ENCODE measurements at regions of chr21 and their contacts with region 1.

Region 1: GRCh38 chr21:17139720-17140119 is 373.1 kb upstream of the CXADR start:
- DNase-seq: no peak
- ATAC-seq: peak in 2 of 8 donors; percentile 24 to 35
- H3K4me3 ChIP-seq: peak overlapping the region in 9 of 10 donors; percentile 22 to 56 (median 44)
- H3K27ac ChIP-seq: peak overlapping the region in 4 of 10 donors; percentile 28 to 62 (median 36)
- H3K4me1 ChIP-seq: no peaks in the 10 kb centered on the region
- H3K27me3 ChIP-seq: no peaks in the 10 kb centered on the region
- CTCF ChIP-seq: no peak

Region 2: DNA sequence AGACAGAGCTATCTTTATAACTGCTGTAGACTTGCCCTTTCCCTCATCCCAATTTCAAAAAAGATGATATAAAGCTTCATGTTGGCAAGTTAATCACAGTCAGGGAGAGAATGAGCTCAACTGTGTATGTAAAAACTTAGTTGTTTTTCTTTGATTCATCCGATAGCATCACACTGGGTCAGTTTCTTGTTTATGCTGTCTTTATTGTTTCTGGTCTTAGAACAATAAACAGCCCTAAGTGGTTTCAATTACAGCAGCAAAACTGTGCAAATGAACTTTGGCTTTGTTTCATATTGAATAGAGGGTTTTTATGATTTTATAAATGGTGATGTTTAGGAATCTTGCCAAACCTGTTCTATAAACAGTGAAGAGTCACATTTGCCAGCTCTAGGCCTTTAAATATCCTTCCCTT is 50.6 kb before region 1 on chr21:
- intact Hi-C with region 1: loop called in 1 of 10 experiments (anchors 10 kb)
- DNase-seq: no peak
- ATAC-seq: no peak
- H3K4me3 ChIP-seq: no peak overlapping the region
- H3K27ac ChIP-seq: no peak overlapping the region
- H3K4me1 ChIP-seq: no peaks in the 10 kb centered on the region
- H3K27me3 ChIP-seq: no peaks in the 10 kb centered on the region
- CTCF ChIP-seq: no peak

Region 3: DNA sequence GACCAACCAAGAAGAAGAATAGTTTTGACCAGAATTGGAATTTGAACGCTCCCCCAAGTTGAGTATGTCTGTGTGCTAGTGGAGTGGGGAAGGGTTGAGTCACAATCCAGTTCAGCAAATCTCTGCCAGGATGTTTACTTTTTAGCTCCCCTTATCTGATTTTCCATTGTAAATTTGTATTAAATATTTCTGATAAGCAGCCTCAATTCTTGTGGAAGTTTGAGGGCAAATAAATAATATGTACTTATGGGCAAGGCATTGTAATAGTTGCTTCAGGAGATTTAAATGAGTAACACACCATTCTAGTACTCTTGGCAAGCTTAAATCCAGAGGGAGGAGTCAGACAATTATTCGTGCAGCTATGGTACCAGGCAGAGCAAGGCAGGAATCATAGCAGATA is 387.5 kb after region 1 on chr21:
- intact Hi-C with region 1: no loop called
- DNase-seq: no peak
- ATAC-seq: peak in 5 of 8 donors; percentile 33 to 75 (median 47)
- H3K4me3 ChIP-seq: no peak overlapping the region
- H3K27ac ChIP-seq: peak overlapping the region in 1 of 10 donors; percentile 10
- H3K4me1 ChIP-seq: peaks cover 0 to 15% (median 3%) of the 10 kb centered on the region in 9 donors
- H3K27me3 ChIP-seq: no peaks in the 10 kb centered on the region
- CTCF ChIP-seq: no peak